Mammary epithelial cell (primary cell): ENCODE measurements at regions of chr19 and their contacts with region 1.

Region 1: GRCh38 chr19:32246006-32246405 is 99.4 kb upstream of the ZNF507 start:
- DNase-seq: no peak
- H3K4me3 ChIP-seq: no peak overlapping the region
- H3K27ac ChIP-seq: no peak overlapping the region
- H3K4me1 ChIP-seq: no peaks in the 10 kb centered on the region
- H3K27me3 ChIP-seq: no peaks in the 10 kb centered on the region
- CTCF ChIP-seq: no peak

Region 2: DNA sequence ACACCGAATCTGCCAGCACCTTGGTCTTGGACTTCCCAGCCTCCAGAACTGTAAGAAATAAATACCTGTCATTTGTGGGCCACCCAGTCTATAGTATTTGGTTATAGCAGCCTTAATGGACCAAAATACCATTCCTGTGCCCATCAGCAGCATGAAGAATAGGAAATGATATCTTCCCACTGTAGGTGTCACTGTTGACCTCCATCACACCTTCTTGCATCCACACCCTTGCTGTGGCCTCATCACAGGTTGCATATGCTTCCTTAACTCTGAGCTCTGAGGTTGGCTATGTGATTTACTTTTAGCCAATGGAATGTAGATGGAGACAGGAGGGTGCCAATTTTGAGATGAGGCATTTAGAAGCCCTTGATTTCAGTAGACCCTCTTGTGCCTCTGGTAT is 654.7 kb before region 1 on chr19:
- CTCF ChIA-PET with region 1: interaction called, 18 read pairs
- dilution Hi-C with region 1: no loop called
- in situ Hi-C with region 1: no loop called
- intact Hi-C with region 1: no loop called
- DNase-seq: peak; percentile 34
- H3K4me3 ChIP-seq: no peak overlapping the region
- H3K27ac ChIP-seq: no peak overlapping the region
- H3K4me1 ChIP-seq: no peaks in the 10 kb centered on the region
- H3K27me3 ChIP-seq: no peaks in the 10 kb centered on the region
- CTCF ChIP-seq: peak in 1 of 2 donors; percentile 29

Region 3: DNA sequence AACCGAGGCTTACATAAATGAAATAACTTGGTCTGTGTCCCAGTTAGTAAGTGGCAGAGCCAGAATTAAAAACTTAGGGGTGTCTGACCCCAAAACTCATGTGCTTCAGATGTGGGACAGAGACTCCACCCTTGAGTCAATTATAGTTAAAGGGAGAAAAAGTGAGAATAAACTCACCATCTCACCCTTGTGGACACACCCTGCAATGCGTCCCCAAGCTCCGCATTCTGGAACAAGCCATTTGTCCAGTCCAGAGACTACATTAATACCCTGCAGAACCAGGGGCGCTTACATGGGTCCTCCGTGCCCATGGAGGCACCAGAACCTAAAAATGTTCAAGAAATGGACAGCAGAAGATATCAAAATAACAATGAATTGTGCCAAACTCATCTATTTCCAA is 107.6 kb before region 1 on chr19:
- CTCF ChIA-PET with region 1: no interaction called
- dilution Hi-C with region 1: no loop called
- in situ Hi-C with region 1: no loop called
- intact Hi-C with region 1: no loop called
- DNase-seq: no peak
- H3K4me3 ChIP-seq: no peak overlapping the region
- H3K27ac ChIP-seq: no peak overlapping the region
- H3K4me1 ChIP-seq: no peaks in the 10 kb centered on the region
- H3K27me3 ChIP-seq: no peaks in the 10 kb centered on the region
- CTCF ChIP-seq: no peak

Region 4: GRCh38 chr19:32339988-32340874 is 94.2 kb after region 1 on chr19:
- CTCF ChIA-PET with region 1: no interaction called
- dilution Hi-C with region 1: no loop called
- in situ Hi-C with region 1: no loop called
- intact Hi-C with region 1: no loop called
- DNase-seq: no peak
- H3K4me3 ChIP-seq: no peak overlapping the region
- H3K27ac ChIP-seq: no peak overlapping the region
- H3K4me1 ChIP-seq: no peaks in the 10 kb centered on the region
- H3K27me3 ChIP-seq: no peaks in the 10 kb centered on the region
- CTCF ChIP-seq: peak; percentile 62 to 73